WTC11 (cell line): ENCODE measurements at regions of chr1 and their contacts with region 1.

Region 1: GRCh38 chr1:91764471-91765115 is 121.4 kb downstream of the TGFBR3 start:
- DNase-seq: peak; percentile 61
- ATAC-seq: peak; percentile 99
- H3K4me3 Mint-ChIP-seq: no peak overlapping the region
- H3K27ac Mint-ChIP-seq: no peak overlapping the region
- H3K4me1 Mint-ChIP-seq: peaks cover 23% of the 10 kb centered on the region
- H3K27me3 Mint-ChIP-seq: no peaks in the 10 kb centered on the region
- CTCF ChIP-seq: no peak

Region 2: GRCh38 chr1:91555821-91556531 is 208.6 kb before region 1 on chr1:
- CTCF ChIA-PET with region 1: interaction called, 10 read pairs
- POLR2A ChIA-PET with region 1: no interaction called
- DNase-seq: no peak
- ATAC-seq: no peak
- H3K4me3 Mint-ChIP-seq: no peak overlapping the region
- H3K27ac Mint-ChIP-seq: no peak overlapping the region
- H3K4me1 Mint-ChIP-seq: no peaks in the 10 kb centered on the region
- H3K27me3 Mint-ChIP-seq: no peaks in the 10 kb centered on the region
- CTCF ChIP-seq: no peak

Region 3: DNA sequence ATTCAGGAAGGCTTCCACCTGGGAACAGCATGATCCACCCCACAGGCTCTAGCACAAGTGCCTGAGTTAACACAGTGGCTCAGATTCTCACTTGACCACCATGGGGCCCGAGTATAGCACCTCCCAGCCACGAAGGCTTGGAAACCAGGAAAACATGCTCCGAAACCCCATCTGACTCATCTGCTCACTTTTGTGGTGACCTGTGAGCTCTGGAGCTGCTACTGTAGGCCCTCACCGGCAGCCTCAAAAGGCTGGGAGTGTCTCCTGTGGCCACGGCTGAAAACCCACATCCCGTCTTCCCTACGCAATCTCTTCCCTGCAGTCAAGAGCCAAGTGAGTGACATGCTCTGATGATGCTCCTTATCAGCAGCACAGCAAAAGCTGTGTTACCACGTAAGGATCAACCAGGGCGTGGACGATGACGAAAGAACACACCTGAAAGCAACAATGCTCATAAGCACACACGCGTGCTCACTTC is 40.0 kb after region 1 on chr1:
- CTCF ChIA-PET with region 1: no interaction called
- POLR2A ChIA-PET with region 1: no interaction called
- DNase-seq: no peak
- ATAC-seq: no peak
- H3K4me3 Mint-ChIP-seq: no peak overlapping the region
- H3K27ac Mint-ChIP-seq: no peak overlapping the region
- H3K4me1 Mint-ChIP-seq: peaks cover 18% of the 10 kb centered on the region
- H3K27me3 Mint-ChIP-seq: no peaks in the 10 kb centered on the region
- CTCF ChIP-seq: no peak

Region 4: GRCh38 chr1:91836331-91837040 is 71.9 kb after region 1 on chr1:
- CTCF ChIA-PET with region 1: no interaction called
- POLR2A ChIA-PET with region 1: no interaction called
- DNase-seq: no peak
- ATAC-seq: no peak
- H3K4me3 Mint-ChIP-seq: no peak overlapping the region
- H3K27ac Mint-ChIP-seq: no peak overlapping the region
- H3K4me1 Mint-ChIP-seq: no peaks in the 10 kb centered on the region
- H3K27me3 Mint-ChIP-seq: no peaks in the 10 kb centered on the region
- CTCF ChIP-seq: no peak